ENCODE measurements at regions of chr10 and their contacts with region 1.

Region 1: DNA sequence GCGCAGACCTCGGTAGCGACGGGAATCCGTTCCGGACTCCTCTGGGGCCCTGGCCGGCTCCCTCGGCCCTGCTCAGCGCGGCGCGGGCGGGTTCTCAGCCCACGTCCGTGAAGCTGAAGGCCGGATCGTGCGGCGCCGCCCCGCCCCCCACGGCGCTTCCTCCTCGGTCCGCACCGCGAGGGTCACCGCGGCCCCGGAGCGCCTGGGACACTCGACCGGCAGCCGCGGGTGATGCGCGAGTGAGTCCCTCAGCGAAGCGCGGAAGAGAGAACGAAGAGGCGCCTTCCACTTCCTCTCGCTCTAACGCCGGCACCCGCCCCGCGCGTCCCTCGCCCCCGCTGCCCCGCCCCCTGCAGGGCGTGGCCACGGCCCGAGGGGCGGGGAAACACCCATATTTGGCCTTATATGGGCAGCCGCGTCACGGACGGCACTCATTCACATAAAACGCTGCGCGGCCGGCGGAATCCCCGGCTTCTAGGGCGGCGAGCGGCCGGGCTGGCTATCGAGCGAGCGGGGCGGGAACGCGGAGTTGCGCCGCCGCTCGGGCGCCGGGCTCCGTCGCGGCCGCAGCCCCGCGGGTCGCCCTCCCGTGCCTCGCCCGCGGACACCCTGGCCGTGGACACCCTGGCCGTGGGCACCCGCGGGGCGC is at the start of gene DUSP5:
- DNase-seq: peak; percentile 98
- H3K4me3 ChIP-seq: peak within 1 kb of the TSS; percentile 69
- H3K27ac ChIP-seq: peak within 1 kb of the TSS; percentile 89
- H3K4me1 ChIP-seq: peaks cover 35% of the 10 kb centered on the region
- H3K27me3 ChIP-seq: no peaks in the 10 kb centered on the region
- CTCF ChIP-seq: no peak
- total RNA-seq, gene DUSP5: 23.2 and 29.3 TPM in 2 replicates

Region 2: GRCh38 chr10:110101464-110102144 is 396.0 kb before region 1 on chr10:
- CTCF ChIA-PET with region 1: no interaction called
- POLR2A ChIA-PET with region 1: no interaction called
- intact Hi-C with region 1: no loop called
- DNase-seq: no peak
- H3K4me3 ChIP-seq: no peak overlapping the region
- H3K27ac ChIP-seq: no peak overlapping the region
- H3K4me1 ChIP-seq: peaks cover 14% of the 10 kb centered on the region
- H3K27me3 ChIP-seq: no peaks in the 10 kb centered on the region
- CTCF ChIP-seq: no peak

Region 3: DNA sequence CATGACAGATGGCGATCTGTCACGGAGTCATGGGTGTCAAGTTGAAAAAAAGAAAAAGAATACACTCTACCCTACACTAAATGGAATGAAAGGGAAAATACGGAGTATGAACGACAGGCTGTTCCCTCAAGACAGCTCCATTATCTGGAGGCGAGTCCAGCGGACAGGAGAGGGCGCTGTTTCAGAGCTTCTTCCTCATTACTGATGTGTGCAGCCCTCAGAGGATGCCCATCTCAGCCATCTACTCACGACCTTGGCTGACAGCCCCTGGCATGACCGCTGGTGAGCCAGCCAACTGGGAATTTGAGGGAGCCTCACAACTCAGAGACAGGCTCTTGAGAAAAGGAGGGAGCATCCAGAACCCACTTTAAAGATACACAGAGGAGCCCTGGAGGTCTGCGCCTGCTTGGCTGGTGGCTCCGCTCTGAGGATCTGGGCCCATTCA is 143.2 kb before region 1 on chr10:
- CTCF ChIA-PET with region 1: interaction called, 4 read pairs
- POLR2A ChIA-PET with region 1: no interaction called
- intact Hi-C with region 1: loop called (anchors 1 kb)
- DNase-seq: peak; percentile 86
- H3K4me3 ChIP-seq: no peak overlapping the region
- H3K27ac ChIP-seq: no peak overlapping the region
- H3K4me1 ChIP-seq: peaks cover 12% of the 10 kb centered on the region
- H3K27me3 ChIP-seq: no peaks in the 10 kb centered on the region
- CTCF ChIP-seq: peak; percentile 95

Region 4: GRCh38 chr10:110528224-110528997 is 30.8 kb after region 1 on chr10:
- CTCF ChIA-PET with region 1: no interaction called
- POLR2A ChIA-PET with region 1: no interaction called
- intact Hi-C with region 1: loop called (anchors 2 kb)
- DNase-seq: peak; percentile 73
- H3K4me3 ChIP-seq: no peak overlapping the region
- H3K27ac ChIP-seq: peak overlapping the region; percentile 76
- H3K4me1 ChIP-seq: peaks cover 64% of the 10 kb centered on the region
- H3K27me3 ChIP-seq: no peaks in the 10 kb centered on the region
- CTCF ChIP-seq: no peak

Region 5: GRCh38 chr10:110535958-110536891 is 38.7 kb after region 1 on chr10:
- CTCF ChIA-PET with region 1: no interaction called
- POLR2A ChIA-PET with region 1: no interaction called
- intact Hi-C with region 1: loop called (anchors 2 kb)
- DNase-seq: peak; percentile 89
- H3K4me3 ChIP-seq: peak overlapping the region; percentile 13
- H3K27ac ChIP-seq: peak overlapping the region; percentile 76
- H3K4me1 ChIP-seq: peaks cover 47% of the 10 kb centered on the region
- H3K27me3 ChIP-seq: no peaks in the 10 kb centered on the region
- CTCF ChIP-seq: peak; percentile 54

Measured in A673 (cell line).